Breast epithelium (tissue), 4 donors: ENCODE measurements at regions of chr22 and their contacts with region 1.

Region 1: DNA sequence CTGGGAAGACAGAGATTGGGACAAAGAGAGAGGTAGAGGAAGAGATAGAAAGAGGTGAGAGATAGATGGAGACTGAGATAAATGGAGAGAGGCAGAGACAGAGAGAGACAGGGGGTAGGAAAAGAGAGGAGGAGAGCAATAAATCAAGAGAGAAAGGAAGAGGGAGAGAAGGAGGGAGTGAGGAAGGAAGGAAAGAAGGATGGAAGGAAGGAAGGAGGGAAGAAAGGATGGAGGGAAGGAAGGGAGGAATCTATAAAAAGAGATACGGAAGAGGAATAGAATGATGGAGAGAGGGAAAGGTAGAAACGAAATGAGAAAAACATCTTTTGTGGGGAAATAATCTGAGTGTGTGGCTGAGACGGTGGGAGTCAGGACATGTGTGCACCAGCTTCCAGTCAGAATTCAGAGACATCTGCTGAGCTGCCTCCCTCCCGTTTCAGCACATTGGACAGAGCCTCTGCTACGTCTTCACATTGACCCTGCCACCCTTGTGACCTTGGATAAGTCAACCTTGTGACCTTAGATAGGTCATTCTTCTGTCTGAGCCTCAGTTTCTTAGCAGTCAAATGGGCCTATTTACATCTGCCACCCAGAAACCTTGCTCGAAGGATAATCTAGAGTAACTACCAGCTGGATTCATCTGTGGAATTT is 417.8 kb downstream of the MIAT start:
- DNase-seq: no peak
- H3K4me3 ChIP-seq: no peak overlapping the region
- H3K27ac ChIP-seq: no peak overlapping the region
- H3K4me1 ChIP-seq: no peaks in the 10 kb centered on the region
- H3K27me3 ChIP-seq: peaks cover 0 to 31% of the 10 kb centered on the region in 2 donors
- CTCF ChIP-seq: no peak
- POLR2A ChIP-seq: no peak

Region 2: GRCh38 chr22:27045103-27045947 is 29.8 kb before region 1 on chr22:
- intact Hi-C with region 1: no loop called
- DNase-seq: no peak
- H3K4me3 ChIP-seq: no peak overlapping the region
- H3K27ac ChIP-seq: no peak overlapping the region
- H3K4me1 ChIP-seq: no peaks in the 10 kb centered on the region
- H3K27me3 ChIP-seq: no peaks in the 10 kb centered on the region
- CTCF ChIP-seq: no peak
- POLR2A ChIP-seq: no peak

Region 3: GRCh38 chr22:27057717-27058116 is 17.4 kb before region 1 on chr22:
- intact Hi-C with region 1: loop called (anchors 1 kb)
- DNase-seq: no peak
- H3K4me3 ChIP-seq: no peak overlapping the region
- H3K27ac ChIP-seq: no peak overlapping the region
- H3K4me1 ChIP-seq: no peaks in the 10 kb centered on the region
- H3K27me3 ChIP-seq: no peaks in the 10 kb centered on the region
- CTCF ChIP-seq: no peak
- POLR2A ChIP-seq: no peak

Region 4: GRCh38 chr22:28521451-28521850 is 1446.3 kb after region 1 on chr22:
- intact Hi-C with region 1: no loop called
- DNase-seq: no peak
- H3K4me3 ChIP-seq: no peak overlapping the region
- H3K27ac ChIP-seq: no peak overlapping the region
- H3K4me1 ChIP-seq: no peaks in the 10 kb centered on the region
- H3K27me3 ChIP-seq: no peaks in the 10 kb centered on the region
- CTCF ChIP-seq: no peak
- POLR2A ChIP-seq: no peak